H1 (cell line): ENCODE measurements at regions of chr15 and their contacts with region 1.

Region 1: GRCh38 chr15:29090617-29091466 is 178.8 kb downstream of the NSMCE3 start:
- DNase-seq: peak in 1 of 2 experiments; percentile 85
- H3K4me3 ChIP-seq: no peak overlapping the region
- H3K27ac ChIP-seq: no peak overlapping the region
- H3K4me1 ChIP-seq: peaks cover 0 to 5% (median 2%) of the 10 kb centered on the region in 4 experiments; a peak in 2 of 7 replicates
- H3K27me3 ChIP-seq: no peaks in the 10 kb centered on the region
- CTCF ChIP-seq: peak; percentile 85 to 92 (median 86)
- EP300 ChIP-seq: no peak
- POLR2A ChIP-seq: no peak
- RAD21 ChIP-seq: peak; percentile 66 to 78

Region 2: DNA sequence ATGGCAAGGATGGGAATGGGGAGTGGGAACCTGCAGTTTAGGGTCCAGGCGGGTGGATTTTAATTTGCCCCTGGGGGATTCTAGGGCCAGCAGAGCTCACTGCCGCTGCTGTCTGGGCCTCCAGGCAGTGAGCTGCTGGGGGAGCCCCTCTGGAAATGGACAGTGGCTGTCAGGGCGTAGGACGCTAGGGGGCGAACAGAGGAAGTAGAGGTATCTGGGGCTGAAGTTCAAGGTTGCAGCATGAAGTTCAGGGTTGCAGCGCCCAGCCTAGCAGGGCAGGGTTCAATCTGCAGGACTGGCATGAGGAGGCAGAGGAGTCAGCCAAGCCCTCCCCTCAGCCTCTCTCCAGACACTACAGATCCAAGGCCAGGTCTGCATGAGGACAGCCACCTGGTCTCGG is 155.5 kb before region 1 on chr15:
- CTCF ChIA-PET with region 1: interaction called, 26 read pairs
- POLR2A ChIA-PET with region 1: no interaction called
- DNase-seq: peak in 1 of 2 experiments; percentile 83
- H3K4me3 ChIP-seq: no peak overlapping the region
- H3K27ac ChIP-seq: no peak overlapping the region
- H3K4me1 ChIP-seq: peaks cover 0 to 9% (median 4%) of the 10 kb centered on the region in 4 experiments; a peak in 4 of 7 replicates
- H3K27me3 ChIP-seq: no peaks in the 10 kb centered on the region
- CTCF ChIP-seq: peak; percentile 83 to 87 (median 86)
- EP300 ChIP-seq: no peak
- POLR2A ChIP-seq: no peak
- RAD21 ChIP-seq: peak; percentile 49 to 65

Region 3: GRCh38 chr15:28984421-28985315 is 106.2 kb before region 1 on chr15:
- CTCF ChIA-PET with region 1: interaction called, 88 read pairs
- POLR2A ChIA-PET with region 1: no interaction called
- DNase-seq: no peak
- H3K4me3 ChIP-seq: no peak overlapping the region
- H3K27ac ChIP-seq: no peak overlapping the region; the same call in 1 of the 2 replicates
- H3K4me1 ChIP-seq: peaks cover 2 to 6% (median 5%) of the 10 kb centered on the region in 4 experiments; a peak in 6 of 7 replicates
- H3K27me3 ChIP-seq: no peaks in the 10 kb centered on the region; a peak in 1 of 7 replicates
- CTCF ChIP-seq: no peak
- EP300 ChIP-seq: no peak
- POLR2A ChIP-seq: no peak
- RAD21 ChIP-seq: no peak

Region 4: GRCh38 chr15:29018120-29018805 is 72.6 kb before region 1 on chr15:
- CTCF ChIA-PET with region 1: interaction called, 46 read pairs
- POLR2A ChIA-PET with region 1: no interaction called
- DNase-seq: peak; percentile 27 to 67
- H3K4me3 ChIP-seq: no peak overlapping the region
- H3K27ac ChIP-seq: no peak overlapping the region
- H3K4me1 ChIP-seq: peaks cover 3 to 7% (median 5%) of the 10 kb centered on the region in 4 experiments; a peak in 6 of 7 replicates
- H3K27me3 ChIP-seq: no peaks in the 10 kb centered on the region
- CTCF ChIP-seq: peak; percentile 64 to 78 (median 77)
- EP300 ChIP-seq: no peak
- POLR2A ChIP-seq: no peak
- RAD21 ChIP-seq: peak; percentile 56 to 74; a peak in 3 of 4 replicates

Region 5: GRCh38 chr15:29040370-29040751 is 50.5 kb before region 1 on chr15:
- CTCF ChIA-PET with region 1: interaction called, 10 read pairs
- POLR2A ChIA-PET with region 1: interaction called, 3 read pairs
- DNase-seq: no peak
- H3K4me3 ChIP-seq: no peak overlapping the region
- H3K27ac ChIP-seq: no peak overlapping the region
- H3K4me1 ChIP-seq: peaks cover 0 to 8% (median 4%) of the 10 kb centered on the region in 4 experiments; a peak in 5 of 7 replicates
- H3K27me3 ChIP-seq: no peaks in the 10 kb centered on the region
- CTCF ChIP-seq: no peak
- EP300 ChIP-seq: no peak
- POLR2A ChIP-seq: no peak
- RAD21 ChIP-seq: no peak

Region 6: GRCh38 chr15:29103824-29104565 is 13.2 kb after region 1 on chr15:
- CTCF ChIA-PET with region 1: interaction called, 90 read pairs
- POLR2A ChIA-PET with region 1: interaction called, 3 read pairs
- DNase-seq: peak; percentile 66 to 92
- H3K4me3 ChIP-seq: peak overlapping the region; percentile 20 to 59 (median 27); a peak in 6 of 8 replicates
- H3K27ac ChIP-seq: no peak overlapping the region
- H3K4me1 ChIP-seq: peaks cover 0 to 17% (median 6%) of the 10 kb centered on the region in 4 experiments; a peak in 5 of 7 replicates
- H3K27me3 ChIP-seq: no peaks in the 10 kb centered on the region
- CTCF ChIP-seq: peak in 2 of 3 experiments; percentile 88 to 94; a peak in 3 of 4 replicates
- EP300 ChIP-seq: peak in 1 of 2 experiments; percentile 19; a peak in 1 of 3 replicates
- POLR2A ChIP-seq: no peak
- RAD21 ChIP-seq: peak; percentile 81 to 91